ENCODE measurements at regions of chr20 and their contacts with region 1.

Region 1: GRCh38 chr20:20860078-20860806 is 147.8 kb upstream of the RALGAPA2 start:
- DNase-seq: peak; percentile 89
- H3K4me3 ChIP-seq: no peak overlapping the region
- H3K27ac ChIP-seq: no peak overlapping the region
- H3K4me1 ChIP-seq: no peaks in the 10 kb centered on the region
- H3K27me3 ChIP-seq: no peaks in the 10 kb centered on the region

Region 2: DNA sequence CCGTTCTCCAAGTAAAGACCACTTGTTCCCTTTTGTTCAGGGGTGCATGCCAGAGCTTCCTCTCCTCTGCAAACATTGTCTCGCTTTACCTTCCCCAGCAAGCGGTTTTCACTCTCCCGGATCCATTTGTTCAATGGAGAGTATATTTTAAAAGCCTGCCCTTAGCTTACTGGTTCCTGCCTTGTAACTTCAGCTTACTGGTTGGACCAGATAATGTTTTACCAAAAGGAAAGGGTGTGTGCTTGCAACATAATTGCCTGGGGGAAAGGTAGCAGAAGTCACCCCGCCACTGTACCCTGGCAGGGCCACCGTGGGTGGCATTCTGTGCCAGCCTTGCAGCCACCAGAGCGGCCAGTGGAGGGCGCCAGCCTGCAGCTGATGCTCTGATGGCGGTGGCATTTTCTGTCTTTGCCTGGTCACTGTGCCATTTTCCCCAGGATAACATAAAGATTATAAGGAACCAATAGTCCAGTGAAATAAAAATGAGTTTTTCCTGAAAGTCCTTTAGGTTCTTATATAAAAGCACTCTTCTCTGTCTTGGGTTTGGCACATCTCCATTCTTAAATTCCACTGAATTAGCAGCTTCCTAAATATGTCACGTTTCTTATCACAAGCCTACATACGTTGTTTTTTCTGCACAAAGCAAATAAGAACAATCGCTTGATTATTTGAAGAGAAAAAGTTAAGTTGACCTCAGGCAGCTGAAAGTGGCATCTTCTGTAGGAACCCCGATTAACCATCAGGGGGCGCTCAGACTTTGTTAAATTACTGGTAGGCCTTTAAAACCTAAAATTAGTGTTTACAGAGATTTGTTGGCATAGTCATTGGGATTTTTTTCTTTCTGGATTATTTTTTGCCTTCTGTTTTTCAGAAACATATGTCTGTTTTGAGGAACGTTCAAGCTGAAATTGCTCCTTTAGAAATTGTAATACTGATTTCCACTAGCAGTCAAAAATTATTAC is 375.5 kb after region 1 on chr20:
- in situ Hi-C with region 1: loop called (anchors 25 kb)
- DNase-seq: peak; percentile 73
- H3K4me3 ChIP-seq: no peak overlapping the region
- H3K27ac ChIP-seq: no peak overlapping the region
- H3K4me1 ChIP-seq: no peaks in the 10 kb centered on the region
- H3K27me3 ChIP-seq: no peaks in the 10 kb centered on the region